Dendritic cell treated with granulocyte-macrophage colony-stimulating factor and Interleukin-4, amounts not matched to agents 40 ng/mL and 50 ng/mL, for 4 days (primary cell): ENCODE measurements at regions of chr3 and their contacts with region 1.

Region 1: GRCh38 chr3:64023187-64023848 is at the start of gene PSMD6:
- H3K4me3 Mint-ChIP-seq: peak within 1 kb of the TSS; percentile 89
- H3K27ac Mint-ChIP-seq: peak within 1 kb of the TSS; percentile 92
- H3K4me1 Mint-ChIP-seq: peaks cover 14% of the 10 kb centered on the region
- H3K27me3 Mint-ChIP-seq: peaks cover 15% of the 10 kb centered on the region

Region 2: DNA sequence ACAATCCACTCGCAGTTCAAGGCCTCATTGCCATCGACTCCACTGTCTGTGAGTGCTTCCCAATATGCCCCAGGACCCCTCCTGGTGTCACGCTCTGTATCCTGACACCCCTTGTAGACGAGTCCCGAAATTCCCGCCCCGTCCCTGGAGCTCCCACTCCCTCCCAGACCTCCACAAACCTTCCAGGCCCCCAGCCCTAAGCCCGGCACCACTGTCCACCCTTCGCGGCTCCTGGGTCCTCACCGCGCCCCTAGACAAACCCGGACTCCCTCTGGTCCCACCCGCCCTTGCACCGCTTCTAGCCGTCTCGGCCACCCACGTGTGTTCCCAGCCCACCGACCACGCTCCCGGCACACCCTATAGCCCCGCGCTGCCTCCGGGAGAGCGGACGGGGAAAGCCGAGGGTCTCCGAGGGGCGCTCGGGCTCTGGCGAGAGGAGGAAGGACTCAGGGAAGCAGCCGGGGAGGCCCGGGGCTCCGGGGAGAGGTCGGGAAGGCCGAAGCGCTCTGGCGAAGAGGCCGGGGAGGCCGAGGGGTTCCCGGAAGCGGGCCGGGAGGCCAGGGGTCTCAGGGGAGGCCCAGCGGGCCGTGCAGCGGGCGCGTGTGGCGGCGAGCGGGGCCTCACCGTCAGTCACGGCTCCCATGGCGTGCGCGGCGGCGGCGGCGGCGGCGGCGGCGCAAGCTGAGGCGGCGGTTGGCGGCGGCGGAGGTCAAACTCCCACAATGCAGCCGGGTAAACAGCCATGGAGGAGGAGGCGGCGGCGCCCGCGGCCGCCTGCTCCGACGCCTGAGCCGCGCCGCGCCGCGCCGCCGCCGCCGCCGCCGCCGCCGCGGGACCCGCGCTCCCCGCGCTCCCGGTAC is 159.9 kb before region 1 on chr3 and contains the starts of genes ATXN7 and THOC7:
- intact Hi-C with region 1: loop called (anchors 1 kb)
- H3K4me3 Mint-ChIP-seq: peak within 1 kb of the TSS; percentile 94
- H3K27ac Mint-ChIP-seq: peak within 1 kb of the TSS; percentile 95
- H3K4me1 Mint-ChIP-seq: peaks cover 54% of the 10 kb centered on the region
- H3K27me3 Mint-ChIP-seq: no peaks in the 10 kb centered on the region